MCF 10A (cell line): ENCODE measurements at regions of chr6 and their contacts with region 1.

Region 1: DNA sequence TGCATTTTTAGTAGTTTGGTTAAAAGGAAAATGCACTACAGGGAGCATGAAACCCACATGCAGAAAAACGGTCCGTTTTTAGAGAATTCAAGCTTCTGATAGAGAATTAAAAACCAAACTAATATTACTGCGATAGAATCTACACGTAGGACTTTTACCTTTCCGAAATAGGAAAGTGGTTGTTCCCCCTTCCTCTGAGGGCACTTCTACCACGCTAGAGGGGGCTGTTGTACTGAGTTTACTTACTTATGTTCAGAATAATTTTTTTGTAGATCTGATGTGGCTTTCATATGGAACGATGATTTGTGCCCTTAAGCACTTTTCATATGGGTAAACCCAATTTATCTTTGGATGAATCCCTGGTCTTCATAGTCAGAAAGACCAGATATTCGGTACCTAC is 264.3 kb upstream of the PLN start:
- DNase-seq: peak; percentile 70
- H3K4me3 Mint-ChIP-seq: no peak overlapping the region
- H3K27ac Mint-ChIP-seq: no peak overlapping the region
- H3K4me1 Mint-ChIP-seq: peaks cover 3% of the 10 kb centered on the region
- H3K27me3 Mint-ChIP-seq: peaks cover 11% of the 10 kb centered on the region
- CTCF ChIP-seq: peak; percentile 75

Region 2: DNA sequence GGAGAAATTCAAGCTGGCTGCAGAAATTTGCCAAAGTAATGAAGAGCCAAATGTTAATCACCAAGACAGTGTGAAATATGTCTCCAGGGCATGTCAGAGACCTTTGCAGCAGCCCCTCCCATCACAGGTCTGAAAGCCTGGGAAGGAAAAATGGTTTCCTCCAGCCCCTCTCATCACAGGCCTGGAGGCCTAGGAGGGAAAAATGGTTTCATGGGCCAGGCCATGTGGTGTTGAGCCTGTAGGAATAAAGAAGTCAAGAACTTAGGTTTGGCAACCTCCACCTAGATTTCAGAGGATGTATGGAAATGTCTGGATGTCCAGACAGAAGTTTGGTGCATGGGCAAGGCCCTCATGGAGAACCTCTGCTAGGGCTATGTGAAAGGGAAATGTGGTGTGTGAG is 191.7 kb before region 1 on chr6:
- CTCF ChIA-PET with region 1: no interaction called
- POLR2A ChIA-PET with region 1: no interaction called
- intact Hi-C with region 1: no loop called
- DNase-seq: no peak
- H3K4me3 Mint-ChIP-seq: no peak overlapping the region
- H3K27ac Mint-ChIP-seq: no peak overlapping the region
- H3K4me1 Mint-ChIP-seq: no peaks in the 10 kb centered on the region
- H3K27me3 Mint-ChIP-seq: peaks cover 2% of the 10 kb centered on the region
- CTCF ChIP-seq: no peak

Region 3: DNA sequence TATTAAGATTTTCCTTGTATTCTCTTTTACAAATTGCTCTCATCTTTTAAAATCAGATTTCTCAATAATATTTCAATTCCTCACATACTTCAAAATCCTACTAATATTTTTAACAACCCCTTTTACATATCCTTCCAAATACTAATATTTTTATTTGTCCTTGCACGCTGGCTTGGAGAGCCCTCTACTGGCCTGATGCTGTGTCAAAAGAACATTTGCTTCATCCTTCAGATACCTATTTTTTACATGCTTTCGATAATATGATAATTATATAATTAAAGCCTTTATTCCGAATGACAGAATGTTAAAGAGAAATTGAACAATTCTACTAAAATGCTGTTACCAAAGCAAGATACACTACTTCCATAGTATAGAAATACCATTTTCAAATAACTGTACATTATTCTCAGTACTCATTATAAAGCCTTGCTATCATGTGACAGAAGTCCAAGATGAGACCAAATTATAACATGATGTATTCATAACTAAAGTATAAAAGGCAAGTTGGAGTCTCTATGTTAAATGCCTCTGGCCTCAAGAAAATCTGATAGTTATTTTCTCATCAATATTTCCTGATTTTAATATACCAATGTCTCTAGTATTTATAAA is 225.3 kb after region 1 on chr6:
- CTCF ChIA-PET with region 1: interaction called, 45 read pairs
- POLR2A ChIA-PET with region 1: no interaction called
- intact Hi-C with region 1: loop called (anchors 1 kb)
- DNase-seq: peak; percentile 43
- H3K4me3 Mint-ChIP-seq: no peak overlapping the region
- H3K27ac Mint-ChIP-seq: no peak overlapping the region
- H3K4me1 Mint-ChIP-seq: no peaks in the 10 kb centered on the region
- H3K27me3 Mint-ChIP-seq: no peaks in the 10 kb centered on the region
- CTCF ChIP-seq: peak; percentile 63

Region 4: DNA sequence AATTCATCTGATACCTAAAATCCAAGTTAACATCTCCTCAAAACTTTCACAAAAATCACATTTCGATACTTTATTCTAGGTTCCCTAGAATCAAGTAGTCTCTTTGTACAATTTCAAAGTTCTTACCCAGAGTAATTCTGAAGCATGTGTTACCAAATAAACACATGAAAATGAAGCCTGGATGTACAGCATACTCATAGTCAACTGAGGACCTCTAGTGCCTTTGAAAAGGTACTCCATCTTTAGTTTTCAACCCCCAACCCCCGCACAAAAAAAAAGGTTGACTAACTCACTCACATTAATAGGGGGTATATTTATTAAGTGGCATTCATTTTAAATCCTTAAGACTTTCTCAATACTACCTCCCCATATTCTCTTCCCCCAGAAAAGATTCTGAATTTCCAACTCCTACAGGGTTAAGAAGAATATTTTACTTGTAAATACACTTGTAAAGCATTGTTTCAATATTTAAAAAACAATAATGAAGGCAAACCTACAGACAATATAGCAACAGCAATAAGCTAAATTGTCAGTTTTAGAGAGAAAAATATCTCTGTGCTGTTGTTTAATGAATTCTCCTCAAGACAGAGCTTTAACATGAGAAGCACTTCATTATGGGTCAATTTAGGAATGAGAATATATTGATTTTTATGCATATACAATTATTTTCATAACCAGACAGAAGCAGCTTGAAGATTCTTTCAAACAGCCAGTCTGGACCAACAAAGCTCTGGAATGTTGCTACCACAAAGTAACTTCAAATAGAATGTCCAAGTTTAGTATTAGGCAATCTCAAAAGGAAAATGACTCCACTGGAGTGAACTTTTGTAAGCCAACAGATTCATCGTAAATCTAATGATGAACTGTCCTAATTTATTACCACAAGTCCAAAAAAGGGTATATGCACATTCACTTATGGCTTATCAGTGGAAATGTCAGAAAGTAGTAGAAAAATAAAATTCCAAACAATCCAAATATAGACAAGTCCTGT is 267.6 kb after region 1 on chr6:
- CTCF ChIA-PET with region 1: interaction called, 11 read pairs
- POLR2A ChIA-PET with region 1: no interaction called
- intact Hi-C with region 1: loop called (anchors 1 kb)
- DNase-seq: peak; percentile 56
- H3K4me3 Mint-ChIP-seq: no peak overlapping the region
- H3K27ac Mint-ChIP-seq: no peak overlapping the region
- H3K4me1 Mint-ChIP-seq: peaks cover 12% of the 10 kb centered on the region
- H3K27me3 Mint-ChIP-seq: no peaks in the 10 kb centered on the region
- CTCF ChIP-seq: peak; percentile 59

Region 5: DNA sequence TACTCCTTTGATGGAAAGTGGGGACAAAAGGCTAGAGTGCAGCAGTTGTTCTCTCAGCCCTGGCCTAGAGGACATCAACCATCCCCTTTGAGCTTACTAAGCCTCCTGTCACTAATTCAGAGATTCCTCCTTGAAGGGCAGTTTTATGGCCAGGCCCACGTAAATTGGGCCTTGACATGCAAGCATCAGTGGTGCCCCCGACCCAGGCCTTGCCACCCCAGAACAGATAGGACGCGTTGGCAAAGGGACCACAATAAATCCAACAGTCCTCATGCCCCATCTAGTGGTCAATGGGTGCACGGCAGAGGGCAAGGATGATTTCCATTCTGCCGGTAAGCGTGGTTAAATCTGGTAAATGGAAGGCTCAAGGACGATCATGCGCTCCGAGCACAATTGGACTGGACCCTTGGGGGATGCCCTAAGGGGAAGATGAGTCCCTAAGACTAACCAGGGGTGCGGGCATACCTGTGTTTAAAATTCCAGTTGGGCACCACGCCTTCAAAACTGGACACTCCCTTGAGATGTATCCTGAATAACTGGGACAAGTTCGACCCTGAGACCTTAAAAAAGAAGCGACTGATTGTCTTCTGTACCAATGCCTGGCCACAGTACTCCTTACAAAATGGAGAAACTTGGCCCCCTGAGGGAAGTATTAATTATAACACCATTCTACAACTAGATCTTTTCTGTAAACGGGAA is 335.1 kb after region 1 on chr6:
- CTCF ChIA-PET with region 1: interaction called, 5 read pairs
- POLR2A ChIA-PET with region 1: no interaction called
- intact Hi-C with region 1: loop called (anchors 1 kb)
- DNase-seq: peak; percentile 67
- H3K4me3 Mint-ChIP-seq: no peak overlapping the region
- H3K27ac Mint-ChIP-seq: no peak overlapping the region
- H3K4me1 Mint-ChIP-seq: peaks cover 7% of the 10 kb centered on the region
- H3K27me3 Mint-ChIP-seq: no peaks in the 10 kb centered on the region
- CTCF ChIP-seq: peak; percentile 89

Region 6: GRCh38 chr6:118800394-118801071 is 516.8 kb after region 1 on chr6:
- CTCF ChIA-PET with region 1: interaction called, 6 read pairs
- POLR2A ChIA-PET with region 1: no interaction called
- intact Hi-C with region 1: loop called (anchors 1 kb)
- DNase-seq: peak; percentile 86
- H3K4me3 Mint-ChIP-seq: no peak overlapping the region
- H3K27ac Mint-ChIP-seq: no peak overlapping the region
- H3K4me1 Mint-ChIP-seq: peaks cover 7% of the 10 kb centered on the region
- H3K27me3 Mint-ChIP-seq: no peaks in the 10 kb centered on the region
- CTCF ChIP-seq: peak; percentile 81

Region 7: GRCh38 chr6:118968416-118968815 is 684.6 kb after region 1 on chr6:
- CTCF ChIA-PET with region 1: interaction called, 3 read pairs
- POLR2A ChIA-PET with region 1: no interaction called
- intact Hi-C with region 1: loop called (anchors 10 kb)
- DNase-seq: peak; percentile 47
- H3K4me3 Mint-ChIP-seq: no peak overlapping the region
- H3K27ac Mint-ChIP-seq: no peak overlapping the region
- H3K4me1 Mint-ChIP-seq: no peaks in the 10 kb centered on the region
- H3K27me3 Mint-ChIP-seq: no peaks in the 10 kb centered on the region
- CTCF ChIP-seq: peak; percentile 28